Posterior vena cava (tissue), 2 donors: ENCODE measurements at regions of chr17 and their contacts with region 1.

Region 1: DNA sequence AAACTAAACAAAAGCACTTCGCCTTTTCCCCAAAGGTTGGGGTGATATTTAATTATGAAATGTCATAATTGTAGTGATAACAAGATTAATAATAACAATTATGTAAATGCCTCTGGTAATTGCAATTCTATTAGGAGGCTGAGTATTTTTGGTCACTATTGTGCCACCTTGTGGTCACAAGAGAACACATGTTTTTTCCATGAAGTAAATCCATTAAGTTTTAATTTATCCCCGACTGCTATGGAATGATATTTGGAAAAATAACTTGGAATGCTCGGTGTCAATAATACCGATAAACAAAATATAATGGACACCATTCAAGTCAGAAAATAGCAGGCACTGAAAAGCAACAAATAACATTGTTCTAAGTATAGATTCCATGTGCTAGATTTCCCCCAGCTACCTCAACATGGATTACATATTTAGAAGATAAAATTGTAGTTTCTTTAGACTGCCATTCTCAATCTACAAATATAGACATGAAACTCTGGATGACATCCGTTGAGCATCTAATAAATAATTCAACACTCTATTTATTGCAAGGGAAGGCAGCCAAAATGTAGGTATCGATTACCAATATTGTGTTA is 25.0 kb upstream of the KCNJ2 start:
- DNase-seq: no peak

Region 2: DNA sequence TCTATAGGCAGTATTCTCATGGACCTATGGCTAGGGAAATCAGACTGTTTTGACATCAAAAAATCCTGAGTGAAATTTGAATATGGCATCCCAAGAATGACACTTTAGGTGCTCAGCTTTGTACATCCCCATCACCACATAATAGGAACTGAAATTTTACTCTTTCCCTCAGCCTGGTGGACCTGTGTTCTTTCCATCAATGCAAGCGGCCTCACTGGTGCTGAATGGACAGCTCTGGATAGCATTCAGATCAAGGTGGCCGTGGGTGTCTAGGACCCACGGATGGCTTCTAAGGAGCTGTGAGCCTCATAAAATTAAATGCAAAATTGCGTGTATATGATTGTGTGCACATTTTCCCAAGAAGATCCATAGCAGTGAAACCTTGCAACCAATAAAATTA is 577.2 kb before region 1 on chr17:
- intact Hi-C with region 1: loop called (anchors 10 kb)
- DNase-seq: no peak

Region 3: GRCh38 chr17:69575346-69575761 is 569.0 kb before region 1 on chr17:
- intact Hi-C with region 1: loop called in 1 of 2 experiments (anchors 10 kb)
- DNase-seq: no peak

Region 4: DNA sequence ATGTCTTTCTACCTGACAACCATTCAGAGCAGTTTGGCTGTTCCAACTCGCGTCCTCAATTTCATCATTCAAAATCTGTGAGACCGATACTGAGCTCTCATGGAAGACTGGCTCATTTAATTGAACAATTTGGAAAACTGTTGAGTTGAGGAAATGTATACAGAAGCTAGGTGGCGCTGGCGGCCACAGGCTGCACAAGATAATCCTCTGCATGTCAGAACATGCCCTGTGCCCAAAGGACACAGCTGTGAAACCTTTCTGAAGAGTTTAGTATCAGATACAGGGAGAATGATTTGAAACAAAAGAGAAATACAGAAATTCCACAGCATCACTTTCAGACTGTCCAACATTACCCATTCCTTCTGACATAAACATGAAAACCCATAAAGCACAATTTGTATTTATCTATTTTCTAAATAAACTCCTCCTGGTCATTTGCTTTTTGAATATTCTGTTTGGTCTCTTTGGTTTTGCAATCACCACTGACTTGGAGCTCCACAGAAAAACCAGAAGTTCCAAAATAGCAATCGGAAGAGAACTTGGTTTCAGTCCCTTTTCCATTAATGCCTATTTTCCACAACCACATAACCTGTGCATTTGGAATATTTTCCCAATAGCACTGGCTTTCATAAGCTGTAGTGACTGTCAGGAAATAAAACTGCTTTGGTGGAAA is 537.1 kb before region 1 on chr17:
- intact Hi-C with region 1: loop called in 1 of 2 experiments (anchors 10 kb)
- DNase-seq: peak; percentile 92

Region 5: DNA sequence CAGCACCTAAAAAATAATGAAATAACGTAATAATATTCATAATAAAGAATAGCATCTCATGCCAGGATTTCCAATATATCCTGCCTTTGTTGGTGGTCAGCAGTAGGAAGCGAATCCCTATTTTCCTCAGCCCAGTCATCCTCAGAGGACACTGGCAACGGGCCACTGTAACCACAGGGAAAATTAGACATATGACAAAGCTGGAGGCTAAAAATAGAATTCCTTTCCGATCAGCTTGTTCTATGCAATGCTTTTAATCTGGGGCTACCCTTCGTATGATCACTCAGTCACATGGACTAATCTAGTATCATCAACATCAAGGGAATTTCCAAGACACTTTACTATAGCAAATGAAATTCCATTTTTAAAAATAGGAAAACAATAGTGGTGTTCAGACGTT is 316.3 kb before region 1 on chr17:
- intact Hi-C with region 1: no loop called
- DNase-seq: no peak

Region 6: DNA sequence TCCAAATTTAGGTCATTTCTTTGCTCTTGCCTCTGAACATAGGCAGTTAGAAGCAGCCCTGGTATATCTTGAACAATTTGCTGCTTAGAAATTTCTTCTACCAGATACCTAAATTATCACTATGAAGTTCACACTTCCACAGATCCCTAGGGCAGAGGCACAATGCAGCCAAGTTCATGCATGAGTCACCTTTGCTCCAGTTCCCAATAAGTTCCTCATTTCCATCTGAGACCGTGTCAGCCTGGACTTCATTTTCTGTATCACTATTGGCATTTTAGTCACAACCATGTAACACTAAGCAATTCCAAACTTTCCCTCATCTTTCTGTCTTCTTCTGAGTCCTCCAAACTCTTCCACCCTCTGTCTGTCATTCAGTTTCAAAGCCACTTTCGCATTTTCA is 24.4 kb before region 1 on chr17:
- intact Hi-C with region 1: no loop called
- DNase-seq: no peak

Region 7: DNA sequence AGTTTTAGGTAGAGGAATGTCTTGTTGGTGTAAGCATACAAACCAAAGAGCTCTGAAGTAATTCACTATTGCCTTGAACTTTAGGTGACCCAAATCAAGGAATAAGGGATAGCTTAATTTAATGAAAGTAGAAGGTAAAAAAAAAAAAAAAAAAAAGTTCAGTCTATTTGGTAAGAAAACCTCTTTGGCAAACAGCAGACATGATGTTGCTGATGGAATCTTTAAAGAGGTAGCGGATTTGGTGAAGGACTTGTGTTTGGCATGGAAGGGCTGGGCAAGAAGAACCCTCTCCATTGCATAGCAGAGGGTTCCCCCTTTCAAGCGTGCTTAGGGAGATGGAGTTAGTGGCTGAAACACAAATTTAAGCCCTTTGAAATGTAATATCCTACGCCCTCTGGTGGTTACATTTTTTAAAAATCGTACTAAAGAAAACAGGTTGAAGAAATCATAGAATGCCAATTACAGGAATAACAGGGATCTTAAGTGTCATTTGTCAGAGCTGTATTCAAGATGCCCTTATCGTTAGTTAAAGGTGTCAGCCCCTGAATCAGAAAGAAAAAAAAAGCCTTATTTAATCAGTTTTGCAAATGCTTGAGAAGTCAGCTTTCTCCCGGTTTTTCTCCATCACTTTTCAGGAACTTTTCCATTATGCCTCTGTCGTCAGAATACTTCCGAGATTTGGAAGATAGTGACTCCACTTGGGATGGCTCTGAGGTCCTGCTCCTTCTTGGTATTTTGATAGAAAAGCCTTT is 408.1 kb after region 1 on chr17:
- intact Hi-C with region 1: loop called in 1 of 2 experiments (anchors 5 kb)
- DNase-seq: no peak